Ovary (tissue), 10 donors: ENCODE measurements at regions of chr7 and their contacts with region 1.

Region 1: DNA sequence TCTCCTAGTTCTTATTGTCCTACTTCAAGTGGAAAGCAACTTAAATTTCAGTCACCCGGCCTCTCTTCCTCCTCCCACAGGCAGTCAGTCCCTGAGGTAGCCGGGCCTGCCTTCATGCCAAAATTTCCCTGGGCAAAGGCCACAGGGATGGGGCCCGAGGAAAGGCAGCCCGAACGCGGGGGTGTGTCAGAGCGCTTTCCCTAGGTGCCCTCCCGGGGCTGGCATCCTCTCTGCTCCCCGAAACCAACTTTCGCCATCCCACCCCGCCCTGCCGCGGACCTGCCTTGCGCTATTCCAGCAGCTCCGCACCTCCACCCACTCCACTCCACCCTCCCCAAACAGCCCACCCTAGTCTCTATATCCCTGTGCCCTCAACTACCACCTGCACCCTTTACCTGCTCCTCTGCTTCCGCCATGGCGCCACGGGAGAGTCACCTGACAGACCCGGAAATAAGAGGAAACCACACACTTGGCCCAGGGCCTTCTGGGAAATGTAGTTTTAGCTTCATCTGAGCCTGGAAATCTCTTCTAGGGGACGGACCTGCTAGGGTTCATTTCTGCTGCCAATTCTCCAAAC is at the start of gene VPS41:
- DNase-seq: peak; percentile 63 to 76 (median 74)
- H3K4me3 ChIP-seq: peak within 1 kb of the TSS; percentile 95
- H3K27ac ChIP-seq: no peak within 1 kb of the TSS
- H3K4me1 ChIP-seq: peaks cover 2% of the 10 kb centered on the region
- H3K27me3 ChIP-seq: no peaks in the 10 kb centered on the region
- CTCF ChIP-seq: no peak
- EP300 ChIP-seq: no peak
- POLR2A ChIP-seq: no peak
- total RNA-seq, gene VPS41: 32.1 to 77.0 (median 57.2) TPM

Region 2: GRCh38 chr7:38699471-38699870 is 209.4 kb before region 1 on chr7:
- intact Hi-C with region 1: no loop called
- DNase-seq: no peak
- H3K4me3 ChIP-seq: no peak overlapping the region
- H3K27ac ChIP-seq: no peak overlapping the region
- H3K4me1 ChIP-seq: no peaks in the 10 kb centered on the region
- H3K27me3 ChIP-seq: no peaks in the 10 kb centered on the region
- CTCF ChIP-seq: no peak
- EP300 ChIP-seq: no peak
- POLR2A ChIP-seq: no peak

Region 3: DNA sequence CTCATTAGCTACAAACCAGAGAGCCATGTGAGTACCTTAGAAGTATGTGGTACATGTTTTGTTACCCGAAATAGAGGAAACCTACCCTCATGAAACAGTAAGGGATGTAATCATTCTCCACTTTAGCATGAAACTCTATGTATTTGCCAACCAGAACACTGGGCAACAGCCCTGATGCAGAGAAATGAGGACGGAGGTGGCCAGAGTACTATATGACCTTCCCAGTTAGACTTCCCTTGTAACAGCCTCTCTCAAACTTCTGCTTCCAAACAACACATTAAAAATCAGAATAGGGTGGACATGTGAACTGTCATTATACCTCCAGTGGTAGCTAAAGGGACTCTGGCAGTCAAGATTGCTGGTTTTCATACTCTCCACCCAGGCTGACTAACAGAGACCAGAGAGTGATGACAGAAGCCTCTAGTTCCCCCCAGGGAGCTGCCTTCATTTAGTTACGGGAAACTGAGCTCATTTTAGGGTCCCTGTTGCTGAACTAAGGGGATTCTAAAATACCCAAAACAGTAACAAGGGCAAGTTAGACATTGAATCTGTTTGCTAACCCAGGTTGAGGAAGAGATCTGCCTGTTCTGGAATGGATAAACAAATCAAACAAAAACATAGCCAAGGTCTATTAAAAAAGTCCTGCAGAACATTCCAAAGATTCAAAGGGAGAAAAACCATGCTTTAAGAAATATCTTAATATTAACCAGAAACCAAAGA is 83.0 kb before region 1 on chr7:
- intact Hi-C with region 1: no loop called
- DNase-seq: no peak
- H3K4me3 ChIP-seq: no peak overlapping the region
- H3K27ac ChIP-seq: peak overlapping the region in 1 of 2 donors; percentile 24
- H3K4me1 ChIP-seq: peaks cover 6% of the 10 kb centered on the region
- H3K27me3 ChIP-seq: no peaks in the 10 kb centered on the region
- CTCF ChIP-seq: no peak
- EP300 ChIP-seq: no peak
- POLR2A ChIP-seq: no peak

Region 4: DNA sequence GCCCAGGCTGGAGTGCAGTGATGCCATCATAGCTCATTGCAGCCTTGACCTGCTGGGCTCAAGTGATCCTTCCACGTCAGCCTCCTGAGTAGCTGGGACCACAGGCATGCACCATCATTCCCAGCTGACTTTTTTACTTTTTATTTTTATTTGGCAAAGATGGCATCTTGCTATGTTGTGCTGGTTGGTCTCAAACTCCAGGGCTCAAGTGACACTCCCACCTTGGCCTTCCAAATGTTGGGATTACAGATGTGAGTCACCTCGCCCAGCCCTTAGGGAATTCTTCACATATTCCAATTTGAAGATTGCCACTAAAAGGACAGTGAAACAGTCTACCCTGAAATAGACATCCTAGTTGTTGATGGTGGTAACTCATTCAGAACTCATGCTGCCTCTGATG is 1253.7 kb after region 1 on chr7:
- intact Hi-C with region 1: loop called in 1 of 4 experiments (anchors 10 kb)
- DNase-seq: no peak
- H3K4me3 ChIP-seq: no peak overlapping the region
- H3K27ac ChIP-seq: no peak overlapping the region
- H3K4me1 ChIP-seq: no peaks in the 10 kb centered on the region
- H3K27me3 ChIP-seq: no peaks in the 10 kb centered on the region
- CTCF ChIP-seq: no peak
- EP300 ChIP-seq: no peak
- POLR2A ChIP-seq: no peak